G401 (cell line): ENCODE measurements at regions of chr20 and their contacts with region 1.

Region 1: GRCh38 chr20:58179432-58180099 is 48.9 kb downstream of the ANKRD60 start:
- DNase-seq: no peak

Region 2: DNA sequence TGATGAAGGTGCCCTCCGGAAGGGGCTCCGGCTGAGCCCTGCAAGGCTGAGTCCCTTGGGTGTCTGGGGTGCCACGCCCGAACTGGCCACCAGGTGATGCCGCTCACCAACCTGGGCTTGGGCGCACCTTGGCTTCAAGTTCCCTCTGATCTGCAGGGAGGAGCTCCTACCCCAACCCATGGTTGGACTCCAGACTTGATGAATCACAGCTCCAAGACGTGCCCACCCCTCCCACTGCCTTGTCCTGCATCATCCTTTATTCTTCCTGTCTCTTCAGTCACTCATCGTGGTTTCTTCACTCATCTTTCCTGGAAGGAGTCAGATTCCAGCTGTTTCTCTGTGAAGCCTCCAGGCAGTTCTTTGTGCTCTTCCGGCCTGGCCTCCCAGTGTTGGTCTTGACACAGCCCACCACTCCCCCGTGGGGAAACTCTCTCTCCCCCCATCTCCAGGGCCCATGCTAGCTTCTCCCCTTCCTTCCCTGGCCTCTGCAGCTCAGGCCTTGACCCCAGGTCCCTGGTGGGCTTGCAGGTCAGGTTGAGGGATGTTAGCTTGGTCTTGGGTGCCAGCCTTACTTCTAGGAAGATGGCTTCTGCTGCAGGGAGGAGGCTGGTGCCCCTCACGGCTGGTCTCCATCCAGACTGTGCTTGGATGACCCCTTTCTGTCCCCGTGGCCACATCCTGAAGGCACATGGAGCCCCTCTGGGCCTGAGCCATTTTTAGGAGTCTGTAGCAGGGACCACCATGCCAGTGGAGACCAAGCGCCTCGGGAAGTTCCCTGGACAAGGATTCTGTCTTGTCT is 556.8 kb before region 1 on chr20:
- in situ Hi-C with region 1: loop called (anchors 25 kb)
- DNase-seq: peak; percentile 4

Region 3: GRCh38 chr20:58112017-58112781 is 67.4 kb before region 1 on chr20:
- in situ Hi-C with region 1: no loop called
- DNase-seq: no peak